ENCODE measurements at regions of chr15 and their contacts with region 1.

Region 1: DNA sequence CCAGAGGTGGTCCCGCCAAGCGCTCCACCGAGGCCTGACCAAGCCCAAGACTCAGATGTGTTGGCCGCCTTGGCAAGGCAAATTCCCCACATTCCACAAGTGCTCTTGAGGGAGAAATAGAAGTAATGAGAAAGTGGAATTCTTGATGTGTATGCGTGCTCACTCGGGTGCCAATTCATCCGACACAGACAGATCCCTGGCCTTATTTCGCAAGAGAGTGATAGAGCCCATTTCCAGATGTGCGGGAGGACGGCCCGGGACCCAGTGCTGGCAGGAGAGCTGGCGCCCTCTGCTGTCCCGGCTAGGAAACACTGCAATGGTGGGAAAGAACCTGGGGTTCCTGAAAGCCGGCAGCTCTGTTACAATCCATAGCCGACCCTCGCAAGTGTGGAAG is 76.0 kb downstream of the HMG20A start:
- DNase-seq: no peak
- ATAC-seq: peak; percentile 92
- H3K4me3 ChIP-seq: no peak overlapping the region
- H3K27ac ChIP-seq: no peak overlapping the region
- H3K4me1 ChIP-seq: peaks cover 20% of the 10 kb centered on the region
- H3K27me3 ChIP-seq: no peaks in the 10 kb centered on the region
- CTCF ChIP-seq: peak; percentile 89 to 96 (median 96)
- EP300 ChIP-seq: no peak
- POLR2A ChIP-seq: no peak
- RAD21 ChIP-seq: peak; percentile 95

Region 2: GRCh38 chr15:77107531-77108355 is 389.0 kb before region 1 on chr15:
- CTCF ChIA-PET with region 1: interaction called, 17 read pairs
- POLR2A ChIA-PET with region 1: interaction called, 3 read pairs
- RAD21 ChIA-PET with region 1: interaction called, 13 read pairs
- SMC1A ChIA-PET with region 1: interaction called, 9 read pairs
- in situ Hi-C with region 1: no loop called
- intact Hi-C with region 1: no loop called
- DNase-seq: no peak
- ATAC-seq: peak; percentile 82
- H3K4me3 ChIP-seq: no peak overlapping the region
- H3K27ac ChIP-seq: no peak overlapping the region
- H3K4me1 ChIP-seq: no peaks in the 10 kb centered on the region
- H3K27me3 ChIP-seq: no peaks in the 10 kb centered on the region
- CTCF ChIP-seq: peak; percentile 61 to 76 (median 69)
- EP300 ChIP-seq: no peak
- POLR2A ChIP-seq: no peak
- RAD21 ChIP-seq: peak; percentile 78

Region 3: DNA sequence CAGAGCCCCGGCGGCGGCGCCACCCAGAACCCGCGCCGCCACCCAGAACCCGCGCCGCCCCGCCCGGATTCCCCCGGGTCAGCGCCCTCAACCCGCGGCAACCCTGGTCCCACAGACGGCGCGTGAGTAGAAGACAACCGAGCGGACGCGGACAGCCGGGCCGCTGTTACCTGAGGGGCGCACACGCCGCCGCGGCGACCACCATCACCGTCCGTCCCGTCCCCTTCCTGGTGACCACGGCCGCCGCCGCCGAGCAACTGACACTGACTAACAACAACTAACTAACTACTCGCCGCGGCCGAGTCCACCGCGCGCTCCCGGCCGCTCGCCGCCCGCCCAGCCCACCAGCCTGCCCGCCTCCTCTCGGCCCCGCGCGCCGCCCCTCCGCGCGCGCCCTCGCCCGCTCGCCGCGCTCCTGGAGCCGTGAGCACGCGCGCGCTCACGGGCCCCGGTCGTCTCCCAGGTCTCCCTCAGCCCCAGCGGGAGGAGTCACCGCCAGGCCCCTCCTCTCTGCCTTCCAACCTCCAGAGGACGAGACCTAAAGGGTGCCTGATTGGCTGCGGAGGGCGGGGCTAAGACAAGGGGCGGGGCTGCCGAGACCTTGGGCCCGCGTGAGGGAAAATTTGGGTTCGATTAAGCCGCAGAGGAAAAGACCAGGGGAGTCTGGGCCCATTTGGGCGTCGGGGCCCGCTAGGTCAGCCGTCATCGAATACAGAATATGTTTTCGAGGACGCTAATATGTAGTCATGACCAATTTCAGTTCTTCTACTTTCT is 76.7 kb before region 1 on chr15 and contains the start of gene PEAK1:
- CTCF ChIA-PET with region 1: interaction called, 10 read pairs
- POLR2A ChIA-PET with region 1: no interaction called
- RAD21 ChIA-PET with region 1: interaction called, 6 read pairs
- SMC1A ChIA-PET with region 1: interaction called, 4 read pairs
- in situ Hi-C with region 1: no loop called
- intact Hi-C with region 1: no loop called
- DNase-seq: peak; percentile 86
- ATAC-seq: peak; percentile 93
- H3K4me3 ChIP-seq: peak within 1 kb of the TSS; percentile 84
- H3K27ac ChIP-seq: peak within 1 kb of the TSS; percentile 98
- H3K4me1 ChIP-seq: no peaks in the 10 kb centered on the region; the same call in 1 of the 2 replicates
- H3K27me3 ChIP-seq: no peaks in the 10 kb centered on the region
- CTCF ChIP-seq: no peak
- EP300 ChIP-seq: no peak
- POLR2A ChIP-seq: peak; percentile 91
- RAD21 ChIP-seq: no peak
- polyA plus RNA-seq, gene PEAK1: 0.62 to 1.1 TPM

Region 4: DNA sequence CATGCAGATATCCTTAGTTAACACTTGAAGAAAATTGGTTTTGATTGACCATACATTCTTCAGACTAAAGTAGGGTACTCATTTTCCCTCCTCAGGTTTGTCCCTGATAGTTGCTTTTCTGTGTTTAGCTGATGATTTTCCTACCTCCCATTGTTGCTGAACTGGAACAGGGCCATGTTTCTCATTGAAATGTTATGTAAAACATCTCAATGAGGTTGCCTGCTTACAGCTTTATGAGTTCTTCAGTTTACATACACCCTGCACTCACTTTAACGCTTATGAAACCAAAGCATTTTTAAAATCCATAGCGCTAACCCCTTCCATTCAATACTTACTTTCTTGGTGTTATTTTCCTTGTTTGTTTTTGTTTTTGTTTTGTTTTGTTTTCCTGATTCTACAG is 14.1 kb before region 1 on chr15:
- CTCF ChIA-PET with region 1: interaction called, 6 read pairs
- POLR2A ChIA-PET with region 1: no interaction called
- RAD21 ChIA-PET with region 1: interaction called, 3 read pairs
- SMC1A ChIA-PET with region 1: interaction called, 43 read pairs
- in situ Hi-C with region 1: no loop called
- intact Hi-C with region 1: no loop called
- DNase-seq: no peak
- ATAC-seq: no peak
- H3K4me3 ChIP-seq: no peak overlapping the region
- H3K27ac ChIP-seq: no peak overlapping the region
- H3K4me1 ChIP-seq: no peaks in the 10 kb centered on the region
- H3K27me3 ChIP-seq: no peaks in the 10 kb centered on the region
- CTCF ChIP-seq: no peak
- EP300 ChIP-seq: no peak
- POLR2A ChIP-seq: no peak
- RAD21 ChIP-seq: no peak

Region 5: GRCh38 chr15:77507911-77508310 is 11.2 kb after region 1 on chr15:
- CTCF ChIA-PET with region 1: interaction called, 29 read pairs
- POLR2A ChIA-PET with region 1: interaction called, 3 read pairs
- RAD21 ChIA-PET with region 1: interaction called, 4 read pairs
- SMC1A ChIA-PET with region 1: interaction called, 4 read pairs
- in situ Hi-C with region 1: no loop called
- intact Hi-C with region 1: no loop called
- DNase-seq: no peak
- ATAC-seq: peak; percentile 54
- H3K4me3 ChIP-seq: no peak overlapping the region
- H3K27ac ChIP-seq: no peak overlapping the region
- H3K4me1 ChIP-seq: peaks cover 22% of the 10 kb centered on the region
- H3K27me3 ChIP-seq: no peaks in the 10 kb centered on the region
- CTCF ChIP-seq: no peak
- EP300 ChIP-seq: no peak
- POLR2A ChIP-seq: no peak
- RAD21 ChIP-seq: no peak

Region 6: DNA sequence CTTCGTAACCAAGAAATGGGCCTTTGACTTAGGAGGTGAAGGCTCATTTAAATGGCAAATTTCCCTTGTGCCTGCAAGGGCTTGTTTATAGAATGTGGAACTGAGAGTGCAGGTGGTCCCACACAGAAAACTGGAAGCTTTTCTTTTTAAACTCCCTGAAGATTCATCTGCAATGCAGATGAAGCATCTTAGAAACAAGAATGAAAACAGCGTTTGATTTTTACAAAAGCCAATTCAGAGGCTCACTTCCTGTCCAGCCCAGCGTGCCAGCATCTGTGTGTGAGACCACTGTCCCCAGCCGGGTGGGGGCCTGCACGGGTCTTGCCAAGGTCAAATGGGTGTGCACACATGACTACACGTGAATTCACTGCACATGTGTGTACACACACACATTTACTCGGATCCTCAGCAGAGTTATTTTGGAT is 41.3 kb after region 1 on chr15:
- CTCF ChIA-PET with region 1: interaction called, 78 read pairs
- POLR2A ChIA-PET with region 1: interaction called, 3 read pairs
- RAD21 ChIA-PET with region 1: interaction called, 51 read pairs
- SMC1A ChIA-PET with region 1: interaction called, 21 read pairs
- in situ Hi-C with region 1: no loop called
- intact Hi-C with region 1: loop called (anchors 5 kb)
- DNase-seq: peak; percentile 72
- ATAC-seq: peak; percentile 82
- H3K4me3 ChIP-seq: peak overlapping the region; percentile 28; the same call in 1 of the 2 replicates
- H3K27ac ChIP-seq: peak overlapping the region; percentile 91
- H3K4me1 ChIP-seq: peaks cover 40% of the 10 kb centered on the region
- H3K27me3 ChIP-seq: no peaks in the 10 kb centered on the region
- CTCF ChIP-seq: no peak
- EP300 ChIP-seq: peak; percentile 53 to 56; a peak in 2 of 4 replicates
- POLR2A ChIP-seq: no peak
- RAD21 ChIP-seq: no peak

Measured in GM12878 (cell line).